ENCODE measurements at regions of chr1 and their contacts with region 1.

Region 1: DNA sequence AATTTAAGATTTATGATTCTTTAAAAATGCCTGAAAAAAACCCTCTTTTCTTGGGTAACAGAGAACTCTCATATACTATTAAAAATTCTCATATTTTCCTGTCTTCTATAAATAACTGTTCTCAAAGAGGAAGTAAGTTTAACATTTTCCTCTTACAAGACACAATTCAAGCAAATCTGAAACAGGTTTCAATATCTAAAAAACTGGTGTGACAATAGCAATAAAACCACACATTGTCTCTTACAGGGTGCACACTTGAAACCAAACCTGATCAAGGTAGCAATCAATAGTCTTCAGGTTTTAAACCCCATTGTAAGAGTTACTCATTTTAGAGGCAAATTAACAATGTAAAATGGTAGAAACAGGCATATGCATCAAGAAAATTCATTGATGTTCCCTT is 28.0 kb downstream of the FUBP1 start:
- H3K4me3 Mint-ChIP-seq: no peak overlapping the region
- H3K27ac Mint-ChIP-seq: no peak overlapping the region
- H3K4me1 Mint-ChIP-seq: peaks cover 11% of the 10 kb centered on the region
- H3K27me3 Mint-ChIP-seq: no peaks in the 10 kb centered on the region

Region 2: GRCh38 chr1:77802026-77802425 is 148.8 kb before region 1 on chr1:
- intact Hi-C with region 1: loop called (anchors 10 kb)
- H3K4me3 Mint-ChIP-seq: no peak overlapping the region
- H3K27ac Mint-ChIP-seq: no peak overlapping the region
- H3K4me1 Mint-ChIP-seq: no peaks in the 10 kb centered on the region
- H3K27me3 Mint-ChIP-seq: no peaks in the 10 kb centered on the region

Region 3: GRCh38 chr1:77978293-77978968 is 27.6 kb after region 1 on chr1:
- intact Hi-C with region 1: no loop called
- H3K4me3 Mint-ChIP-seq: no peak overlapping the region
- H3K27ac Mint-ChIP-seq: no peak overlapping the region
- H3K4me1 Mint-ChIP-seq: peaks cover 27% of the 10 kb centered on the region
- H3K27me3 Mint-ChIP-seq: no peaks in the 10 kb centered on the region